HCT116 (cell line): ENCODE measurements at regions of chr6 and their contacts with region 1.

Region 1: GRCh38 chr6:18748314-18748713 is 361.2 kb downstream of the RNF144B start:
- DNase-seq: no peak
- ATAC-seq: no peak
- H3K4me3 ChIP-seq: no peak overlapping the region
- H3K27ac ChIP-seq: no peak overlapping the region
- H3K4me1 ChIP-seq: no peaks in the 10 kb centered on the region
- H3K27me3 ChIP-seq: peaks cover 3% of the 10 kb centered on the region; the same call in 1 of the 2 replicates
- CTCF ChIP-seq: no peak
- POLR2A ChIP-seq: no peak
- RAD21 ChIP-seq: no peak

Region 2: DNA sequence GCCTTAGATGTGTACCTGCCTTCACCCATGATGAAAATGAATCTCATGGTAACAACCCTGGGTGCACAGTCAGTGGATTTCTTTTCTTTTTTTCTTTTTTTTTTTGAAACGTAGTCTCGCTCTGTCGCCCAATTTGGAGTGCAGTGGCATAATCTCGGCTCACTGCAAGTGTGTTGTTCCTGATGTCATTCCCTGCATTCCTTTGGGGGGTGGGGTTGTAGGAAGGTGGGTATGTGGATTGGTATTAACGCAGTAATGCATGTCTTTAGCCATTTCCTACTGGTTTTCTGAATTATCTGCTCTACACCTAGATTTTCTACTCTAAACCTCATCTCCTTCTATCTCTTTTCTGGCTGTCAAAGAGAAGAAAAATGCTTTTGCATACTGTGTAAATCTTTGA is 214.5 kb before region 1 on chr6:
- CTCF ChIA-PET with region 1: interaction called, 3 read pairs
- POLR2A ChIA-PET with region 1: no interaction called
- RAD21 ChIA-PET with region 1: no interaction called
- intact Hi-C with region 1: loop called (anchors 5 kb)
- DNase-seq: no peak
- ATAC-seq: no peak
- H3K4me3 ChIP-seq: no peak overlapping the region
- H3K27ac ChIP-seq: no peak overlapping the region
- H3K4me1 ChIP-seq: no peaks in the 10 kb centered on the region; a peak in 1 of 4 replicates
- H3K27me3 ChIP-seq: no peaks in the 10 kb centered on the region
- CTCF ChIP-seq: no peak
- POLR2A ChIP-seq: no peak
- RAD21 ChIP-seq: no peak

Region 3: DNA sequence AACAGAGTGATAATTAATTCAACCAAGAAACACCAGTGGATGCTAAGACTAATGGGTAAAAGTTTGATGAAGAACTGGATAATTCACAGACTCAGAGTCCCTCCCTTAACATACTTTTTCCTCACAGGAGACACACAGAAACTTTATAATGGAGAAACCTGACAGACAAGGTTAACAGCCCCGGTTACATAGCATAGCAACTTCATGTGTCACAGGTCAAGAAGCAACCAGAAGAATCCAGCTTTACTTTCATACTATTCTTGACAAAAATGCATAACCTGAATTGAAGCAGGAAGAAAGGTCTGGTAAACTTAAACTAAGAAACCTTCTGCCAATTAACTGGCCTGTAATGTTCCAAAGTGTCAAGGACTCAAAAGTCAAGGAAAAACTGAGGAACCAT is 14.8 kb after region 1 on chr6:
- CTCF ChIA-PET with region 1: no interaction called
- POLR2A ChIA-PET with region 1: no interaction called
- RAD21 ChIA-PET with region 1: no interaction called
- intact Hi-C with region 1: no loop called
- DNase-seq: no peak
- ATAC-seq: no peak
- H3K4me3 ChIP-seq: no peak overlapping the region
- H3K27ac ChIP-seq: no peak overlapping the region
- H3K4me1 ChIP-seq: no peaks in the 10 kb centered on the region
- H3K27me3 ChIP-seq: no peaks in the 10 kb centered on the region
- CTCF ChIP-seq: no peak
- POLR2A ChIP-seq: no peak
- RAD21 ChIP-seq: no peak